ENCODE measurements at regions of chr12 and their contacts with region 1.

Region 1: DNA sequence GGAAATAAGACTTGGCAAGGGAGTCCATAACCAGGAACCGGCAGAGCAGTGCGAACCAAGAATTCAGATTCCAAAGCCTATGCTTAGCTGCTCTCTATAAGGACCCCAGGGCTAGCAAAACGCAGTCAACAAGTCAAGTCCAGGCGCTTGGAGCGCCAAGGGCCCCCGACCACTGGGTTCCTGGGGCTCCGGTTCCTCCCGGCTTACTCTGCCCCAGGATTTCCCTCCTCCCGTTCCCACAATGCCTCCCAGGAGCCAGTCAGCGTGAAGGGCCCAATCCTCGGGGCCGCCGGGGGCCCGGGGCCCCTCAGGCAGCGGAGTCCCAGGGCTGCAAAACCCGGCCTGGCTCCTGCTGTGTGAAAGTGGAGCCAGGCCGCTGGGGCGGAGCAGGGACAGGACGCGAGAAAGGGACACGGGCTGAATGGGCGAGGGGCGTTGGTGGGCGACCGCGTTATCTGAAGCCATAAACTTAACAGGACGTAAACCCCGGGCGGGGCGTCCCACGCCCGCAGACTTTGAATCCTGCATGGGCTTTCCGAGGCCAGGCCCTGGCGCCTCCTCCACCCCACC is 1.5 kb downstream of the KRT8 start:
- DNase-seq: peak; percentile 76 to 93
- H3K4me3 ChIP-seq: peak overlapping the region; percentile 54 to 73 (median 66)
- H3K27ac ChIP-seq: peak overlapping the region; percentile 88 to 93 (median 91)
- H3K4me1 ChIP-seq: peaks cover 27 to 78% (median 56%) of the 10 kb centered on the region in 4 donors
- H3K27me3 ChIP-seq: no peaks in the 10 kb centered on the region
- CTCF ChIP-seq: no peak
- EP300 ChIP-seq: no peak
- POLR2A ChIP-seq: no peak

Region 2: DNA sequence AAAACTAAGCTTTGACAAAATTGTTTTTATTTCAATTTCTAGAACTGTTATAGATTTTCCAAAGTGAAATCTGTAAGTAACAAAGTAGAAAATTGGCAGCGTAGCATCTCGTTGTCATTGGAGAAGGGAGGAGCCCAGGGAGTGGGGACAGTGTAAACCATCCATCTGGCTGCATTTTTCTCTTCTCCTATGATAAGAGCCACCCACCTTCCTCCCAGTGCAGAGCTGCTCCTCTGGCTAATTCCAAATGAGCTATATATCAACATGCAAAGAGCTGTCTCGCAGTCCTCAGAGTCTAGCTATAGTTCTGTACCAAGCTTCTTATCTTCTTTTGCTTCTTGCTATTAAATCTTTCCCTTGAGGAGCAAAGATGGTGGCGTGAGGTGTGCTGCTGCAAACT is 1255.7 kb before region 1 on chr12:
- intact Hi-C with region 1: no loop called
- DNase-seq: no peak
- H3K4me3 ChIP-seq: no peak overlapping the region
- H3K27ac ChIP-seq: no peak overlapping the region
- H3K4me1 ChIP-seq: no peaks in the 10 kb centered on the region
- H3K27me3 ChIP-seq: no peaks in the 10 kb centered on the region
- CTCF ChIP-seq: no peak
- EP300 ChIP-seq: no peak
- POLR2A ChIP-seq: no peak

Region 3: GRCh38 chr12:52799062-52799761 is 104.2 kb before region 1 on chr12:
- intact Hi-C with region 1: no loop called
- DNase-seq: no peak
- H3K4me3 ChIP-seq: no peak overlapping the region
- H3K27ac ChIP-seq: no peak overlapping the region
- H3K4me1 ChIP-seq: peaks cover 6 to 13% (median 10%) of the 10 kb centered on the region in 4 donors
- H3K27me3 ChIP-seq: peaks cover 0 to under 1% (median 0%) of the 10 kb centered on the region in 3 donors
- CTCF ChIP-seq: no peak
- EP300 ChIP-seq: no peak
- POLR2A ChIP-seq: no peak

Region 4: GRCh38 chr12:52949413-52950331 is 46.3 kb after region 1 on chr12:
- intact Hi-C with region 1: loop called (anchors 10 kb)
- DNase-seq: peak; percentile 81 to 94
- H3K4me3 ChIP-seq: peak overlapping the region; percentile 45 to 67 (median 60)
- H3K27ac ChIP-seq: peak overlapping the region; percentile 89 to 93 (median 92)
- H3K4me1 ChIP-seq: peaks cover 19 to 59% (median 46%) of the 10 kb centered on the region in 4 donors
- H3K27me3 ChIP-seq: peaks cover 0 to 25% (median 7%) of the 10 kb centered on the region in 3 donors
- CTCF ChIP-seq: no peak
- EP300 ChIP-seq: no peak
- POLR2A ChIP-seq: peak in 2 of 4 donors; percentile 44 to 79